Endothelial cell of umbilical vein (primary cell): ENCODE measurements at regions of chr1 and their contacts with region 1.

Region 1: DNA sequence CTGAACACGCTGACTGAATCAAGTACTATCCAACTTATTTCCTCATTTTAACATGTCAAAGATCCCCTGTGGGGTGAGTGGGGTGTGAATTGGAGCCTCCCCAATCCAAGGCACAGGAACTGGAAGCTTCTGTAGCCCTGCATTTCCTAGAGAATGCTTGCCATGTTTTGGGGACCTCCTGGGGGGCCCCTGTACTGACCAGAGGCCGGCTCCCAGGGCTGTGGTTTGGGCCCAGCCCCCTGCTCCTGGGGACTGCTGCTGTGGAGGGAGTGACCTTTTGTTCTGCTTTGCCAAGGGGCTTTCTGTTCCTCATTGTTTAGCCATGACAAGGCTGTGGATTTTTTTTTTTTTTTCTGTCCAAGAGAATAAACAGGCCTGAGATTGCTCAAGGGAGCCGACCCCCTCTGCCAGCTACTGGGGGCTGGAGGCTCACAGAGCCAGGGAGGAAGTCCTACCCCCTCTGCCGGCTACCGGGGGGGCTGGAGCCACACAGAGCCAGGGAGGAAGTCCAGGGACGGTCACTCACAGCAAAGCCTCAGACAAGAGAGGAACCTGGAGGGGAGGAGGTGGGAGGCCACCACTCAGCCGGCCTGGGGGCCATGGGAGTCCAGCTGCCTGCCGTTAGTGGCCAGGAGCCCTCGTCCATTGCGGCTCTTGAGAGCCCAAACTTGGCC is 17.4 kb downstream of the TNFRSF1B start:
- DNase-seq: peak; percentile 93
- H3K4me3 ChIP-seq: no peak overlapping the region
- H3K27ac ChIP-seq: peak overlapping the region; percentile 90
- H3K4me1 ChIP-seq: peaks cover 31% of the 10 kb centered on the region
- H3K27me3 ChIP-seq: no peaks in the 10 kb centered on the region
- CTCF ChIP-seq: peak; percentile 42 to 55
- POLR2A ChIP-seq: no peak

Region 2: GRCh38 chr1:12132092-12132491 is 52.1 kb before region 1 on chr1:
- CTCF ChIA-PET with region 1: interaction called, 70 read pairs
- POLR2A ChIA-PET with region 1: interaction called, 12 read pairs
- dilution Hi-C with region 1: no loop called
- intact Hi-C with region 1: loop called (anchors 1 kb)
- DNase-seq: no peak
- H3K4me3 ChIP-seq: no peak overlapping the region
- H3K27ac ChIP-seq: no peak overlapping the region
- H3K4me1 ChIP-seq: peaks cover 8% of the 10 kb centered on the region
- H3K27me3 ChIP-seq: no peaks in the 10 kb centered on the region
- CTCF ChIP-seq: no peak
- POLR2A ChIP-seq: no peak

Region 3: DNA sequence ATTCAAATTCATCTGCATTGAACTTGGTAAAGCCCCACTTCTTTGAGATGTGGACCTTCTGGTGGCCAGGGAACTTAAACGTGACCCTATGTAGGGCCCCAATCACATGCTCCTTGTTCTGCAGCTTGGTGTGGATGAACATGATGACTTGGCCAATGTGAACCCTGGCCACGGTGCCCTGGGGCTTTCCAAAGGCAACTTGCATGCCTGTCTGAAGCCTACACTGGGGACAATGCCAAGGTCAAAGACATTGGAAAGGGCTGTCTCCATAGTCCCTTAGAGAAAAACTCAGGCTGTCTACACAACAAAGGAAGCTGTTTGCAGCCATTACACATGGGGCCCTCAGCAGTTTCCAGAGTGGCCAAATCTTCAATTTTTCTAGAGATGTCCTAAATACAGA is 36.7 kb after region 1 on chr1:
- CTCF ChIA-PET with region 1: no interaction called
- POLR2A ChIA-PET with region 1: no interaction called
- dilution Hi-C with region 1: no loop called
- intact Hi-C with region 1: no loop called
- DNase-seq: no peak
- H3K4me3 ChIP-seq: no peak overlapping the region
- H3K27ac ChIP-seq: no peak overlapping the region
- H3K4me1 ChIP-seq: no peaks in the 10 kb centered on the region
- H3K27me3 ChIP-seq: peaks cover 2% of the 10 kb centered on the region in 2 experiments
- CTCF ChIP-seq: no peak
- POLR2A ChIP-seq: no peak